ENCODE measurements at regions of chr1 and their contacts with region 1.

Region 1: GRCh38 chr1:202713110-202713509 is 2.9 kb upstream of the SYT2 start:
- DNase-seq: no peak
- ATAC-seq: no peak
- H3K4me3 ChIP-seq: no peak overlapping the region
- H3K4me3 Mint-ChIP-seq: no peak overlapping the region
- H3K27ac ChIP-seq: no peak overlapping the region
- H3K27ac Mint-ChIP-seq: no peak overlapping the region
- H3K4me1 ChIP-seq: no peaks in the 10 kb centered on the region
- H3K4me1 Mint-ChIP-seq: peaks cover 0 to 12% (median 5%) of the 10 kb centered on the region in 7 donors
- H3K27me3 ChIP-seq: peaks cover 0 to 3% of the 10 kb centered on the region in 2 donors
- H3K27me3 Mint-ChIP-seq: peaks cover 36 to 77% (median 42%) of the 10 kb centered on the region in 5 donors

Region 2: GRCh38 chr1:202172015-202172355 is 541.1 kb before region 1 on chr1:
- CTCF ChIA-PET with region 1: no interaction called
- POLR2A ChIA-PET with region 1: no interaction called
- intact Hi-C with region 1: no loop called
- DNase-seq: no peak
- ATAC-seq: peak; percentile 36
- H3K4me3 ChIP-seq: no peak overlapping the region
- H3K4me3 Mint-ChIP-seq: no peak overlapping the region
- H3K27ac ChIP-seq: no peak overlapping the region
- H3K27ac Mint-ChIP-seq: no peak overlapping the region
- H3K4me1 ChIP-seq: no peaks in the 10 kb centered on the region
- H3K4me1 Mint-ChIP-seq: peaks cover 0 to 9% (median 0%) of the 10 kb centered on the region in 7 donors
- H3K27me3 ChIP-seq: no peaks in the 10 kb centered on the region
- H3K27me3 Mint-ChIP-seq: no peaks in the 10 kb centered on the region

Region 3: GRCh38 chr1:202192770-202193613 is 520.1 kb before region 1 on chr1:
- CTCF ChIA-PET with region 1: interaction called, 5 read pairs
- POLR2A ChIA-PET with region 1: no interaction called
- intact Hi-C with region 1: loop called in 1 of 2 experiments (anchors 2 kb)
- DNase-seq: peak in 8 of 9 donors; percentile 18 to 57 (median 40)
- ATAC-seq: peak; percentile 48
- H3K4me3 ChIP-seq: no peak overlapping the region
- H3K4me3 Mint-ChIP-seq: peak overlapping the region in 3 of 10 donors; percentile 52 to 74 (median 54)
- H3K27ac ChIP-seq: no peak overlapping the region
- H3K27ac Mint-ChIP-seq: no peak overlapping the region
- H3K4me1 ChIP-seq: peaks cover 6 to 8% of the 10 kb centered on the region in 2 donors
- H3K4me1 Mint-ChIP-seq: peaks cover 1 to 16% (median 7%) of the 10 kb centered on the region in 7 donors
- H3K27me3 ChIP-seq: no peaks in the 10 kb centered on the region
- H3K27me3 Mint-ChIP-seq: peaks cover 21 to 42% (median 26%) of the 10 kb centered on the region in 5 donors

Region 4: GRCh38 chr1:202728951-202729350 is 15.8 kb after region 1 on chr1:
- CTCF ChIA-PET with region 1: interaction called, 19 read pairs
- POLR2A ChIA-PET with region 1: no interaction called
- intact Hi-C with region 1: no loop called
- DNase-seq: no peak
- ATAC-seq: no peak
- H3K4me3 ChIP-seq: no peak overlapping the region
- H3K4me3 Mint-ChIP-seq: no peak overlapping the region
- H3K27ac ChIP-seq: no peak overlapping the region
- H3K27ac Mint-ChIP-seq: peak overlapping the region in 2 of 9 donors; percentile 2 to 64
- H3K4me1 ChIP-seq: no peaks in the 10 kb centered on the region
- H3K4me1 Mint-ChIP-seq: peaks cover 0 to 4% (median 0%) of the 10 kb centered on the region in 7 donors
- H3K27me3 ChIP-seq: no peaks in the 10 kb centered on the region
- H3K27me3 Mint-ChIP-seq: no peaks in the 10 kb centered on the region

Measured in naive thymus-derived CD4-positive, alpha-beta T cell (primary cell).